WTC11 (cell line): ENCODE measurements at regions of chr16 and their contacts with region 1.

Region 1: DNA sequence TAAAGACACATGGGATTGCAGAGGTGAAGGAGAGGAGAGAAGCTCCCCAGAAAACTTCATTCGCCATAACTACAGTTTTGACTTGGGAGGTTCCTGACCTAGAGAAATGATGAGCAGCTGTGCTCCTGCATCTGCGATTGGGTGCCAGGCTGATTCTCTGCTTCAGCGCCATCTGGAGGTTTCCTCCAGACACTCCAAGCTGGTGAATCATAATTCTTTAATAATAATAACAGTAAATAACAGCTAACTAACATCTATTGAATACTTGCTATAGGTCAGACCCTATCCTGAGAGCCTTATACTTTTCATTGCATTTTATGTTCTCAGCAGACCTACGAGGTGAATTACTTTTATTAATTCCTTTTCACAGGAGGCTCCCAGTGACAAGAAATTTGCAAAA is 575.8 kb downstream of the TOX3 start:
- DNase-seq: peak; percentile 46
- ATAC-seq: peak; percentile 85
- H3K4me3 Mint-ChIP-seq: no peak overlapping the region
- H3K27ac Mint-ChIP-seq: no peak overlapping the region
- H3K4me1 Mint-ChIP-seq: peaks cover 31% of the 10 kb centered on the region
- H3K27me3 Mint-ChIP-seq: no peaks in the 10 kb centered on the region
- CTCF ChIP-seq: peak; percentile 48; the same call in 1 of the 2 replicates

Region 2: GRCh38 chr16:51864575-51864974 is 106.6 kb before region 1 on chr16:
- CTCF ChIA-PET with region 1: no interaction called
- POLR2A ChIA-PET with region 1: no interaction called
- DNase-seq: no peak
- ATAC-seq: no peak
- H3K4me3 Mint-ChIP-seq: no peak overlapping the region
- H3K27ac Mint-ChIP-seq: no peak overlapping the region
- H3K4me1 Mint-ChIP-seq: peaks cover 4% of the 10 kb centered on the region; the same call in 1 of the 2 replicates
- H3K27me3 Mint-ChIP-seq: no peaks in the 10 kb centered on the region
- CTCF ChIP-seq: no peak

Region 3: GRCh38 chr16:51939378-51939871 is 31.8 kb before region 1 on chr16:
- CTCF ChIA-PET with region 1: interaction called, 12 read pairs
- POLR2A ChIA-PET with region 1: no interaction called
- DNase-seq: no peak
- ATAC-seq: peak; percentile 56
- H3K4me3 Mint-ChIP-seq: no peak overlapping the region
- H3K27ac Mint-ChIP-seq: no peak overlapping the region
- H3K4me1 Mint-ChIP-seq: peaks cover 31% of the 10 kb centered on the region
- H3K27me3 Mint-ChIP-seq: no peaks in the 10 kb centered on the region
- CTCF ChIP-seq: no peak

Region 4: GRCh38 chr16:51982715-51983680 is 11.8 kb after region 1 on chr16:
- CTCF ChIA-PET with region 1: interaction called, 10 read pairs
- POLR2A ChIA-PET with region 1: no interaction called
- DNase-seq: peak; percentile 22
- ATAC-seq: no peak; the same call in 1 of the 2 replicates
- H3K4me3 Mint-ChIP-seq: no peak overlapping the region
- H3K27ac Mint-ChIP-seq: no peak overlapping the region
- H3K4me1 Mint-ChIP-seq: peaks cover 2% of the 10 kb centered on the region; the same call in 1 of the 2 replicates
- H3K27me3 Mint-ChIP-seq: 0 out of 2 replicates have a peak, but pooled peaks cover 2% of the 10 kb centered on the region
- CTCF ChIP-seq: peak; percentile 69